H1 (cell line): ENCODE measurements at regions of chr11 and their contacts with region 1.

Region 1: GRCh38 chr11:78645226-78646202 is 70.8 kb upstream of the NARS2 start:
- DNase-seq: peak; percentile 77 to 95
- H3K4me3 ChIP-seq: no peak overlapping the region
- H3K27ac ChIP-seq: no peak overlapping the region
- H3K4me1 ChIP-seq: no peaks in the 10 kb centered on the region
- H3K27me3 ChIP-seq: no peaks in the 10 kb centered on the region; a peak in 1 of 7 replicates
- CTCF ChIP-seq: peak; percentile 89 to 99 (median 90)
- EP300 ChIP-seq: no peak
- POLR2A ChIP-seq: no peak
- RAD21 ChIP-seq: peak; percentile 96

Region 2: DNA sequence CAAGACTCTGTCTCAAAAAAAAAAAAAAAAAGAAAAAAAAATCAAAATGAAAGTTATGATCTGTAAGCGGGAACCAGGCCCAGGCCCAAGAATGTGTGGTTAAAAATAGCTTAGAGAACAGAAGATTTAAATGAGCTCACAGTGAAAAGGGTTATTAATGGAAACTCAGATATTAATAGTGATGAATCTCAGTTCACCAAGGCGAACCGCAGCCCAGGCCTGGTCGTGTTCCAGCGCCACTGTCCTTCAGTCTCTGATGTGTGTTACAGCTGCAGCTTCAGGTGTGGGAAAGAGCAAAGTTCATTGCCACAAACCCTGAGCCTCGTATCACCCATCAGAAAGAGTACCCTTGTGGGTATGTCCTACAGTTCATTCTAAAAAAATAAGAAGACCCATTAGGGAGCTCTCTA is 335.0 kb before region 1 on chr11:
- CTCF ChIA-PET with region 1: no interaction called
- POLR2A ChIA-PET with region 1: no interaction called
- DNase-seq: no peak
- H3K4me3 ChIP-seq: no peak overlapping the region
- H3K27ac ChIP-seq: no peak overlapping the region
- H3K4me1 ChIP-seq: no peaks in the 10 kb centered on the region
- H3K27me3 ChIP-seq: no peaks in the 10 kb centered on the region
- CTCF ChIP-seq: no peak
- EP300 ChIP-seq: no peak
- POLR2A ChIP-seq: no peak
- RAD21 ChIP-seq: no peak

Region 3: DNA sequence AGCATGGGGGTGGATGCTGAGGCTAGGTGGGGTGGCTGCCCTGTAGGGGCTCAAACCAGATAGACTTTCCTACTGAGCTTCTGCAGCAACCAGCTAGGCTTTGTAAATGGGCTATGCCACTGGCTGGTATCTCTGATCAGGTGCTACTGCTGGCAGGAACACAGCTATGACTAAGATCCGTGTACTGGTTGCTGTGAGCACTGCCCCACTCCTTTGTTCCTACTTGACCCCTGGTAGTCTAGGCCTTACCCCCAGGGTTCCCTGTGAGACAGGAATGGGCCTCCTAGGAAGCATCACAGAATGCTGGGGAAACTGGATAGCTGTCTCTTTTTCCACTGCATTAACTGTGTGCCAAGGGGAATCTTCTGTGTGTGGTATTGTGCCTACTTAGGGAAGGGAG is 169.4 kb before region 1 on chr11:
- CTCF ChIA-PET with region 1: no interaction called
- POLR2A ChIA-PET with region 1: no interaction called
- DNase-seq: no peak
- H3K4me3 ChIP-seq: no peak overlapping the region
- H3K27ac ChIP-seq: no peak overlapping the region
- H3K4me1 ChIP-seq: no peaks in the 10 kb centered on the region
- H3K27me3 ChIP-seq: no peaks in the 10 kb centered on the region
- CTCF ChIP-seq: no peak
- EP300 ChIP-seq: no peak
- POLR2A ChIP-seq: no peak
- RAD21 ChIP-seq: no peak

Region 4: GRCh38 chr11:78676026-78676557 is 30.6 kb after region 1 on chr11:
- CTCF ChIA-PET with region 1: interaction called, 40 read pairs
- POLR2A ChIA-PET with region 1: no interaction called
- DNase-seq: no peak
- H3K4me3 ChIP-seq: no peak overlapping the region
- H3K27ac ChIP-seq: no peak overlapping the region
- H3K4me1 ChIP-seq: no peaks in the 10 kb centered on the region
- H3K27me3 ChIP-seq: no peaks in the 10 kb centered on the region
- CTCF ChIP-seq: peak in 1 of 3 experiments; percentile 8; a peak in 1 of 4 replicates
- EP300 ChIP-seq: no peak
- POLR2A ChIP-seq: no peak
- RAD21 ChIP-seq: no peak

Region 5: DNA sequence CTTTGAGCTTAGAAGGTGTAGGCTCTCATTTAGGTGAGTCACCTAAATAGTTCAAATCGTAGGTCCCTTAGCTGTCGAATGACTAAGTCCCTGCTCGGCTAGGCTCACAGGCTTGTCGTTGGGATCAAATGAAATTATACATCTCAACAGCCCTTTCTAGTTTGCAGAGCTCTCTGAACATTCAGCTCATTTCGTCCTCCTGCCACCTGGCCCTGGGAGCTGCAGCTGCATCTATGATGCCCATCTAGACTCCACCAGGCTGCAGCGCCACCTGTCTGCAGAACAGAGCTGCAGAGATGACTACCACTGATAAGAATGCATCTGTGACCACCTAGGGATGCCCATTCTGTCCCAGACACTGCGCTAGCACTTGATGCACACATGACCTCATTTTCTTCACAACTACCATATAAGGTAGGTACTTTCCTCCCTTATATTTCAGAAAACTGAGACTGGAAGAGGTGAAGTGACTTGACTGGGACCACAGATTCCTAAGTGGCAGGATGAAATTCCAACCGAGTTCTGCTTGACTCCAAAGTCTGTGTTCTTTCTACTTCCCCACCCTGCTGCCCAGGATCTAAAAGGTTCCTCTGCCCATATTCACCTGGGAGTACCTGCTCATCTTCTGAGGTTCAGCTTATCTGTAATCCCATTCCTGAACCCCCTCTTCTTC is 70.3 kb after region 1 on chr11:
- CTCF ChIA-PET with region 1: interaction called, 314 read pairs
- POLR2A ChIA-PET with region 1: interaction called, 7 read pairs
- DNase-seq: peak; percentile 69 to 86
- H3K4me3 ChIP-seq: no peak overlapping the region
- H3K27ac ChIP-seq: no peak overlapping the region
- H3K4me1 ChIP-seq: no peaks in the 10 kb centered on the region
- H3K27me3 ChIP-seq: no peaks in the 10 kb centered on the region
- CTCF ChIP-seq: peak; percentile 96 to 100 (median 98)
- EP300 ChIP-seq: no peak
- POLR2A ChIP-seq: no peak
- RAD21 ChIP-seq: peak; percentile 87 to 91

Region 6: GRCh38 chr11:78759071-78759470 is 113.6 kb after region 1 on chr11:
- CTCF ChIA-PET with region 1: interaction called, 18 read pairs
- POLR2A ChIA-PET with region 1: no interaction called
- DNase-seq: no peak
- H3K4me3 ChIP-seq: no peak overlapping the region
- H3K27ac ChIP-seq: no peak overlapping the region
- H3K4me1 ChIP-seq: no peaks in the 10 kb centered on the region
- H3K27me3 ChIP-seq: no peaks in the 10 kb centered on the region
- CTCF ChIP-seq: no peak
- EP300 ChIP-seq: no peak
- POLR2A ChIP-seq: no peak
- RAD21 ChIP-seq: no peak

Region 7: DNA sequence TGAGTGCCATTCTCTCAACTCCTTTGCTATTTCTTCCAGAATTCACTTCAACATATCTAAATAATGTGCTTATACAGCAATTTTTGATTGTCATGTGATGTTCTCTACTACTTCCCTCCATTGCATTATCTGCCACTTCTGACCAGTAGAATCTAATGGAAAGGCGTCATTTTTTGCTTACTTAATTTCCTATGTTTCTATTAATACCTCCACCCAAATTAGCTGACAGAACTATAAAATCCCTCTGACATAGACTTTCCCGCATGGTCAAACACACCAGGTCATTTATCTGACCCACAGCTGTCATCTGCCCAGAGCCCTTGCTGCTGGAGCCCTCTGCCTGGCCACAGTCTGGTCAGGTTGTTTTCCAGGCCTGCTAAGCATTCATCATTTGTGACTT is 187.7 kb after region 1 on chr11:
- CTCF ChIA-PET with region 1: interaction called, 15 read pairs
- POLR2A ChIA-PET with region 1: no interaction called
- DNase-seq: no peak
- H3K4me3 ChIP-seq: no peak overlapping the region
- H3K27ac ChIP-seq: no peak overlapping the region
- H3K4me1 ChIP-seq: peaks cover 0 to 5% (median 2%) of the 10 kb centered on the region in 4 experiments; a peak in 2 of 7 replicates
- H3K27me3 ChIP-seq: no peaks in the 10 kb centered on the region
- CTCF ChIP-seq: no peak
- EP300 ChIP-seq: no peak
- POLR2A ChIP-seq: no peak
- RAD21 ChIP-seq: no peak

Region 8: DNA sequence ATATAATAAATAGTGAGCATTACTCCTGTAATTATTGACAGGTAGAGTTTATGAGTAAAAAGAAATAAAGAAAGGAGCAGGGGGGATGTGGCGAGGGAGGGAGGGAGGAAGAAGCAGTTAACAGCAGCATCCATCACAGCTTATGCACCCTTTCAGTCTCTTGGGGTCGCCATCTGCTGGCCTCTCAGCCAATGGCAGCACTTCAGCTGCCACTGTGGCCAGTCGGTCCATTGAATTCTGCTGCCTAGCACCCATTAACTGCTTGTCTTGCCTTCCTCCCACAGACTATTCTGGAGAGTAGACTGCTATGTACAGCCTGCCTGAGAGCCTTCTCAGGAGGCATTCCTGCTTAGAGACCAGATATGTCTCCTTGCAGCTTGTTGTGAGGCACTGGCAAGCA is 407.0 kb after region 1 on chr11:
- CTCF ChIA-PET with region 1: interaction called, 10 read pairs
- POLR2A ChIA-PET with region 1: no interaction called
- DNase-seq: no peak
- H3K4me3 ChIP-seq: no peak overlapping the region
- H3K27ac ChIP-seq: no peak overlapping the region
- H3K4me1 ChIP-seq: no peaks in the 10 kb centered on the region
- H3K27me3 ChIP-seq: no peaks in the 10 kb centered on the region
- CTCF ChIP-seq: peak; percentile 33 to 66 (median 50)
- EP300 ChIP-seq: no peak
- POLR2A ChIP-seq: no peak
- RAD21 ChIP-seq: peak; percentile 44 to 49